CD4-positive, alpha-beta memory T cell (primary cell): ENCODE measurements at regions of chr5 and their contacts with region 1.

Region 1: DNA sequence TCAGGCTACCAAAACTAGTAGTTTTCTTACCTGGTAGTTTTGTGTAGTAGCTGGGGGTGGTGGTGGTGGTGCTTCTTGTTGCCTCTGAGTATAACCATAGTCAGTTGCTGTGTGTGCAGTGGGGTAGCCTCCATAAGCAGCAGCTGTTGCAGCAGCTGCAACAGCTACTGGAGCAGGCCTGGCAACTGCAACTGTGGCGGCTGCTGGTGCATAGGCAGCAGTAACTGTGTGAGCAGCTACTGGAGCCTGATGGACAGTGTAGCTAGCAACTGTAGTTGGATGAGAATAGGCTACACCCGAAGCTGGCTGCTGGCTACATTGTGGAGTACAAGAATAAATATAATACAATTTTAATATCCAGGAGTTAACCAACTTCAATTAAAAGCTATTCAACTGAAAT is 24.7 kb downstream of the ZFR start:
- DNase-seq: no peak
- H3K4me3 ChIP-seq: no peak overlapping the region
- H3K4me3 Mint-ChIP-seq: no peak overlapping the region
- H3K27ac ChIP-seq: no peak overlapping the region
- H3K27ac Mint-ChIP-seq: no peak overlapping the region
- H3K4me1 ChIP-seq: peaks cover 24% of the 10 kb centered on the region
- H3K4me1 Mint-ChIP-seq: peaks cover 24 to 48% (median 39%) of the 10 kb centered on the region in 4 donors
- H3K27me3 ChIP-seq: no peaks in the 10 kb centered on the region
- H3K27me3 Mint-ChIP-seq: no peaks in the 10 kb centered on the region

Region 2: DNA sequence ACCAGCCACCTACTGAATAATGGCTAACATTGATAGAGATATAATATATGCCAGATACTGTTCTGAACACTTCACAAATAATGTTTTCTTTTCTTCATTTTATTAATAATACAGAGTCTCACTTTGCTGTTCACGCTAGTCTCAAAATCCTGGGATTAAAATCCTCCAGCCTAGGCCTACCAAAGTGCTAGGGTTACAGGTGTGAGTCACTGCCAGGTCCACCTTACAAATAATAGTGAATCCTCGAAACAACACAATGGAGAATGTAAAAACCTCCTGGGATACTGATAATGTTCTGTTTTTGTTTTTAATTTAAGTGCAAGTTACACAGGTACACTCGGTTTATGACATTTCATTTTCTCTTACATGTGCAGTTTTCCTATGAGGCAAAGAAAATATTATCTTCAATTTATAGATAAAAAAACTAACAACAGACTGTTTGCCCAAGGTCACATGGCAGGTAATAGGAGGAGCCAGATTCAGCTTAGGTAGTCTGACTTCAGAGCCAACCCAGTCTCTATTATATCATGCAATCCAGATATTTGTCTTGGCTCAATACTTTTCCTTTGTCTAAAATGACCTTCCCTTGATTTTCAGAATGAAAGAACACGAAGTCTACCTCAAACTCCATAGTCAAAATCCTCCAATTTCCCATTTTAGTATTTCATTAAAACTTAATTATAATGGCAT is 16.9 kb after region 1 on chr5:
- CTCF ChIA-PET with region 1: no interaction called
- POLR2A ChIA-PET with region 1: interaction called, 3 read pairs
- intact Hi-C with region 1: loop called (anchors 2 kb)
- DNase-seq: no peak
- H3K4me3 ChIP-seq: no peak overlapping the region
- H3K4me3 Mint-ChIP-seq: peak overlapping the region in 2 of 8 donors; percentile 10 to 26
- H3K27ac ChIP-seq: no peak overlapping the region
- H3K27ac Mint-ChIP-seq: no peak overlapping the region
- H3K4me1 ChIP-seq: peaks cover 80% of the 10 kb centered on the region
- H3K4me1 Mint-ChIP-seq: peaks cover 37 to 77% (median 57%) of the 10 kb centered on the region in 4 donors
- H3K27me3 ChIP-seq: no peaks in the 10 kb centered on the region
- H3K27me3 Mint-ChIP-seq: no peaks in the 10 kb centered on the region